H1 (cell line): ENCODE measurements at regions of chr18 and their contacts with region 1.

Region 1: GRCh38 chr18:79933765-79934164 is 17.7 kb downstream of the SLC66A2 start:
- DNase-seq: peak in 1 of 2 experiments; percentile 19
- H3K4me3 ChIP-seq: no peak overlapping the region
- H3K27ac ChIP-seq: no peak overlapping the region
- H3K4me1 ChIP-seq: no peaks in the 10 kb centered on the region
- H3K27me3 ChIP-seq: no peaks in the 10 kb centered on the region; a peak in 1 of 7 replicates
- CTCF ChIP-seq: peak; percentile 54 to 71 (median 69)
- EP300 ChIP-seq: no peak
- POLR2A ChIP-seq: no peak
- RAD21 ChIP-seq: peak; percentile 74 to 76

Region 2: DNA sequence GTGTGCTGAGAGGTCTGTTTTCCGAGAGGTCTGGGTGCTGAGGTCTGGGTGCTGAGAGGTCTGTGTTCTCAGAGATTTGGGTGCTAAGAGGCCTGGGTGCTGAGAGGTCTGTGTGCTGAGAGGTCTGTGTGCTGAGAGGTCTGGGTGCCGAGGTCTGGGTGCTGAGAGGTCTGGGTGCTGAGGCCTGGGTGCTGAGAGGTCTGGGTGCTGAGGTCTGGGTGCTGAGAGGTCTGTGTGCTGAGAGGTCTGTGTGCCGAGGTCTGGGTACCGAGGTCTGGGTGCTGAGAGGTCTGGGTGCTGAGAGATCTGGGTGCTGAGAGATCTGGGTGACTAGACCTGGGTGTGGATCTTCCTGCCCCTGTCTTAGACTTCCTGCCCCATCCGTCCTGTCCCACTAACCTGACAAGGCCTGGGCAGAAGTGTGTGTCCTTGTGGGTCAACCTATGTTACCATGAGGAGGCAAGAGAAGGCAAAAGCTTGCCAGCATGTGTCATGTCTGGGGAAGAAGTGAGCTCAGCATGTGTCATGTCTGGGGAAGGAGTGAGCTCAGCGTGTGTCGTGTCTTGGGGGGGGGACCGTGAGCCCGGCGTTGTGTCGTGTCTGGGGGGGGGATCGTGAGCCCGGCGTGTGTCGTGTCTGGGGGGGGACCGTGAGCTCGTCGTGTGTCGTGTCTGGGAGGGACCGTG is 66.7 kb before region 1 on chr18:
- CTCF ChIA-PET with region 1: no interaction called
- POLR2A ChIA-PET with region 1: no interaction called
- DNase-seq: no peak
- H3K4me3 ChIP-seq: no peak overlapping the region
- H3K27ac ChIP-seq: no peak overlapping the region
- H3K4me1 ChIP-seq: no peaks in the 10 kb centered on the region
- H3K27me3 ChIP-seq: no peaks in the 10 kb centered on the region
- CTCF ChIP-seq: no peak
- EP300 ChIP-seq: no peak
- POLR2A ChIP-seq: no peak
- RAD21 ChIP-seq: no peak

Region 3: GRCh38 chr18:79944126-79944741 is 10.5 kb after region 1 on chr18:
- CTCF ChIA-PET with region 1: interaction called, 19 read pairs
- POLR2A ChIA-PET with region 1: no interaction called
- DNase-seq: no peak
- H3K4me3 ChIP-seq: no peak overlapping the region
- H3K27ac ChIP-seq: no peak overlapping the region
- H3K4me1 ChIP-seq: peaks cover 0 to 13% (median 8%) of the 10 kb centered on the region in 4 experiments; a peak in 4 of 7 replicates
- H3K27me3 ChIP-seq: no peaks in the 10 kb centered on the region; a peak in 1 of 7 replicates
- CTCF ChIP-seq: no peak
- EP300 ChIP-seq: no peak
- POLR2A ChIP-seq: no peak
- RAD21 ChIP-seq: no peak

Region 4: DNA sequence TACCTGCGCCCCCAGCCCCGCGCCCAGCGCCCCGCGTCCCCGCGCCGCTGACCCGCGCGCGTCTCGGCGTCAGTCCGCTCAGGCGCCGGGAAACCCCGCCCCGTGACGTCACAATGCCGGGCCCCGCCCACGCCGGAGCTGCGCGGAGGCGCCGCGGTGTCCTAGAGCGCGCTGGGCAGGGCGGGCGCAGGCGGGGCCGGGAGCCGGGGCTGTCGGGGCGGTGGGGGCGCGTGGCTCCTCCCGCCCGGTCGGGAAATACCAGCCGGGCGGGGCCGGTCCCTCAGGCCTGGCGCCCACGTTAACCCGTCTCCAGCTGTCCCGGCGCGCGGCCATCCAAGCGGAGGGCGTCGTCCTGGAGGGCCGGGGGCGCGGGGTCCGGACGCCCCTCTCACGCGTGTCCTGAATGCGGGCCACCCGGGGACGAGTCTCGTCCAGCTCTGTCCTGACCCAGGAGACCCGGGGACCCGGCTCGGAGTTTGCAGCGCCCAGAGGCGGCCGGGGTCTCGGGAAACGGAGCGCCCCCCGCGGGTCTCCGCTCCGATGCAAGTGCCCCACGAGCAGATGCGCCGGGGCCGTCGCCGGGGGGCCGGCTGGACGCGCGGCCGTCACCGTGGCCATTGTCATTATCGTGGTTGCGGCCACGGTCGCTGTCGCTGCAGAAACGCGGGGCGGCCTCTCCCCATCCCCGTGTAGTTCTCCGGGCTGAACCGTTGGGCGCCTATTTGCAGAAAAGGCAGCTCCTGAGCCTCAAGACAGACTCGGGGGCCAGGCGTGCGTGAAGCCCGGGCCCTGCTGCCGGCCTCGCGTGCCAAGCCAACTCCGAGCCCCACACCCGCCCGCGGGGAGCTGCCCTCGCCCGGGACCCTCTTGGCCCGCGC is 18.1 kb after region 1 on chr18 and contains the start of gene SLC66A2:
- CTCF ChIA-PET with region 1: interaction called, 19 read pairs
- POLR2A ChIA-PET with region 1: interaction called, 4 read pairs
- DNase-seq: peak in 1 of 2 experiments; percentile 99
- H3K4me3 ChIP-seq: peak within 1 kb of the TSS; percentile 57 to 84 (median 66)
- H3K27ac ChIP-seq: no peak within 1 kb of the TSS
- H3K4me1 ChIP-seq: peaks cover 2 to 9% (median 5%) of the 10 kb centered on the region in 4 experiments
- H3K27me3 ChIP-seq: peaks cover 10 to 44% (median 39%) of the 10 kb centered on the region in 4 experiments
- CTCF ChIP-seq: 0 out of 4 replicates have a peak, but pooled peaks of 1 of the 3 experiments have one; percentile 4
- EP300 ChIP-seq: no peak
- POLR2A ChIP-seq: no peak
- RAD21 ChIP-seq: no peak
- total RNA-seq, gene SLC66A2: 11.6 and 15.0 TPM in 2 replicates